Breast epithelium (tissue), 4 donors: ENCODE measurements at regions of chr3 and their contacts with region 1.

Region 1: GRCh38 chr3:162658005-162658404 is 1161.4 kb downstream of the OTOL1 start:
- DNase-seq: no peak
- H3K4me3 ChIP-seq: no peak overlapping the region
- H3K27ac ChIP-seq: no peak overlapping the region
- H3K4me1 ChIP-seq: no peaks in the 10 kb centered on the region
- H3K27me3 ChIP-seq: no peaks in the 10 kb centered on the region
- CTCF ChIP-seq: no peak
- POLR2A ChIP-seq: no peak

Region 2: GRCh38 chr3:162141272-162141791 is 516.7 kb before region 1 on chr3:
- intact Hi-C with region 1: loop called (anchors 10 kb)
- DNase-seq: no peak
- H3K4me3 ChIP-seq: no peak overlapping the region
- H3K27ac ChIP-seq: no peak overlapping the region
- H3K4me1 ChIP-seq: no peaks in the 10 kb centered on the region
- H3K27me3 ChIP-seq: no peaks in the 10 kb centered on the region
- CTCF ChIP-seq: no peak
- POLR2A ChIP-seq: no peak

Region 3: DNA sequence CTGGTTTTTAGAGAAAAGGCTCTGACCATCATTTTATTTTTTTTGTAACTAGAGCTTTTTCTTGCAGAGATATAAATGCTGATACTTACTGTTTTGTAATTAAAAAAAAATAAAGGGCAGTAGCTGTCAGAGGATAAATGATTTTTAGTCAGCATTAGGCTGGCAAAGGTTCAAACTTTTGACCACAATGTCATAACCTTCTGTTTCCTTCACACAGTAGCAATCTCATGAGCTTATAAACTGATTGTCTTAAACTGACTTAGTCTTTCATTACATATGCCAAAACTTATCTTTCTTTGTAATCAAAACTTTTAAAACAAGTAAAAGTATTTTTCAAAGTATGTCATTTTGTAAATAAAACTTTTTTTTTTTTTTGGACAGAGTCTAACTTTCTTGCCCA is 319.5 kb before region 1 on chr3:
- intact Hi-C with region 1: no loop called
- DNase-seq: no peak
- H3K4me3 ChIP-seq: no peak overlapping the region
- H3K27ac ChIP-seq: no peak overlapping the region
- H3K4me1 ChIP-seq: no peaks in the 10 kb centered on the region
- H3K27me3 ChIP-seq: no peaks in the 10 kb centered on the region
- CTCF ChIP-seq: no peak
- POLR2A ChIP-seq: no peak

Region 4: DNA sequence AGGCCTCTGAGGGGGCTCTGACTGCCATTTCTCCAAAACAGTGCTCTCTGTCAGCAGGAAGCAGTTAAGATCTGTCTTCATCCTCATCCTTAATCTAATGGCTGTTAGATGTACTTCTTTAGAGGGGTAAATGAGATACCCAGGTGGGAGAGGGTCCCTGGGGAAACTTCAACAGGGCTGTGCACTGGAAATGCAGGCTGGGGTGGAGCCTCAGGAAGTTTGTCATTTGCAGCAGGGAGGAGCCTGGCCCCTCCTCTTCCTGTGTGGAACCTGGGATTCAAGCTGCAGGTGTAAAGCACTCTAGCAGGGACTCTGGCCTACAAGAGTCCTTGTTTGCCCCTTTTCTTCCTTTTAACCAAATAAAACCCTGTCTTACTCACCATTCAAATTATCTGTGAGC is 12.2 kb after region 1 on chr3:
- intact Hi-C with region 1: no loop called
- DNase-seq: no peak
- H3K4me3 ChIP-seq: no peak overlapping the region
- H3K27ac ChIP-seq: no peak overlapping the region
- H3K4me1 ChIP-seq: no peaks in the 10 kb centered on the region
- H3K27me3 ChIP-seq: no peaks in the 10 kb centered on the region
- CTCF ChIP-seq: no peak
- POLR2A ChIP-seq: no peak

Region 5: GRCh38 chr3:162842549-162843216 is 184.7 kb after region 1 on chr3:
- intact Hi-C with region 1: loop called (anchors 5 kb)
- DNase-seq: no peak
- H3K4me3 ChIP-seq: no peak overlapping the region
- H3K27ac ChIP-seq: no peak overlapping the region
- H3K4me1 ChIP-seq: no peaks in the 10 kb centered on the region
- H3K27me3 ChIP-seq: no peaks in the 10 kb centered on the region
- CTCF ChIP-seq: no peak
- POLR2A ChIP-seq: no peak